ENCODE measurements at regions of chr3 and their contacts with region 1.

Region 1: GRCh38 chr3:69250014-69250413 is 127.6 kb upstream of the LMOD3 start:
- DNase-seq: no peak
- ATAC-seq: peak; percentile 62

Region 2: GRCh38 chr3:69294014-69294775 is 44.2 kb after region 1 on chr3:
- intact Hi-C with region 1: loop called (anchors 5 kb)
- DNase-seq: no peak
- ATAC-seq: no peak